Activated T-helper 1 cell treated with anti-CD3 and anti-CD28 coated beads, Interleukin-12 subunit alpha, Interleukin-12 subunit beta, Interleukin-2, Interleukin-4 antibody, amounts not matched to agents 30 ng/mL and 10 ng/mL and 1 ng/mL, durations not matched to agents 14 hours and 24 hours and 36 hours (primary cell): ENCODE measurements at regions of chr12 and their contacts with region 1.

Region 1: GRCh38 chr12:69359531-69360347 is at the start of gene YEATS4:
- DNase-seq: peak; percentile 88
- H3K4me3 Mint-ChIP-seq: peak within 1 kb of the TSS; percentile 94
- H3K27ac Mint-ChIP-seq: peak within 1 kb of the TSS; percentile 89
- H3K4me1 Mint-ChIP-seq: peaks cover 33% of the 10 kb centered on the region
- H3K27me3 Mint-ChIP-seq: peaks cover 3% of the 10 kb centered on the region
- total RNA-seq, gene YEATS4: 45.2 and 47.2 TPM in 2 replicates

Region 2: GRCh38 chr12:69290545-69291277 is 69.0 kb before region 1 on chr12:
- intact Hi-C with region 1: loop called (anchors 1 kb)
- DNase-seq: peak; percentile 60
- H3K4me3 Mint-ChIP-seq: no peak overlapping the region
- H3K27ac Mint-ChIP-seq: no peak overlapping the region
- H3K4me1 Mint-ChIP-seq: no peaks in the 10 kb centered on the region
- H3K27me3 Mint-ChIP-seq: peaks cover 27% of the 10 kb centered on the region

Region 3: DNA sequence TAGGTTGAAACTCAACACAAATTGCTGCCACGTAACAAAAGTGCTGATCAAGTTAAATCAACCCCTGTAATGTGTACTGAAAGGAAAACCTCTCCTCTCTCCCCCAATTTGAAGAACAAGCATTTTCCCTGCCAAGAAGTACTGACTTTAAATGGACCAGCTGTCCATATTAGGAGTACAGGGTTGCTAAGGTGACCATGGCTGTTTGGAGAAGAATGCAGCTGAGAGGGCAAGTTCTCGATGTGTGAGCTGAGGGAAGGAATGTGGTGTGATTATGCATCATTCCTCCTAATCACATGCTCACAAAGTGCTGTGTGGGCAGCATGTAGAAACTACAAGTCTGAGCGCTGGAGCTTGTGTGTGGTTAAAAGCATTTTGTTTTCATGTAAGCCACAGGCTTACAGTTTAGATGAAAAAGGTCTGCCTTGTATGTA is 174.7 kb after region 1 on chr12:
- intact Hi-C with region 1: loop called (anchors 1 kb)
- DNase-seq: peak; percentile 20
- H3K4me3 Mint-ChIP-seq: no peak overlapping the region
- H3K27ac Mint-ChIP-seq: peak overlapping the region; percentile 79
- H3K4me1 Mint-ChIP-seq: peaks cover 24% of the 10 kb centered on the region
- H3K27me3 Mint-ChIP-seq: no peaks in the 10 kb centered on the region

Region 4: GRCh38 chr12:69585189-69586062 is 225.7 kb after region 1 on chr12 and contains the start of gene CCT2:
- intact Hi-C with region 1: loop called (anchors 1 kb)
- DNase-seq: peak; percentile 94
- H3K4me3 Mint-ChIP-seq: peak within 1 kb of the TSS; percentile 98
- H3K27ac Mint-ChIP-seq: peak within 1 kb of the TSS; percentile 97
- H3K4me1 Mint-ChIP-seq: peaks cover 11% of the 10 kb centered on the region
- H3K27me3 Mint-ChIP-seq: no peaks in the 10 kb centered on the region
- total RNA-seq, gene CCT2: 442 and 447 TPM in 2 replicates

Region 5: DNA sequence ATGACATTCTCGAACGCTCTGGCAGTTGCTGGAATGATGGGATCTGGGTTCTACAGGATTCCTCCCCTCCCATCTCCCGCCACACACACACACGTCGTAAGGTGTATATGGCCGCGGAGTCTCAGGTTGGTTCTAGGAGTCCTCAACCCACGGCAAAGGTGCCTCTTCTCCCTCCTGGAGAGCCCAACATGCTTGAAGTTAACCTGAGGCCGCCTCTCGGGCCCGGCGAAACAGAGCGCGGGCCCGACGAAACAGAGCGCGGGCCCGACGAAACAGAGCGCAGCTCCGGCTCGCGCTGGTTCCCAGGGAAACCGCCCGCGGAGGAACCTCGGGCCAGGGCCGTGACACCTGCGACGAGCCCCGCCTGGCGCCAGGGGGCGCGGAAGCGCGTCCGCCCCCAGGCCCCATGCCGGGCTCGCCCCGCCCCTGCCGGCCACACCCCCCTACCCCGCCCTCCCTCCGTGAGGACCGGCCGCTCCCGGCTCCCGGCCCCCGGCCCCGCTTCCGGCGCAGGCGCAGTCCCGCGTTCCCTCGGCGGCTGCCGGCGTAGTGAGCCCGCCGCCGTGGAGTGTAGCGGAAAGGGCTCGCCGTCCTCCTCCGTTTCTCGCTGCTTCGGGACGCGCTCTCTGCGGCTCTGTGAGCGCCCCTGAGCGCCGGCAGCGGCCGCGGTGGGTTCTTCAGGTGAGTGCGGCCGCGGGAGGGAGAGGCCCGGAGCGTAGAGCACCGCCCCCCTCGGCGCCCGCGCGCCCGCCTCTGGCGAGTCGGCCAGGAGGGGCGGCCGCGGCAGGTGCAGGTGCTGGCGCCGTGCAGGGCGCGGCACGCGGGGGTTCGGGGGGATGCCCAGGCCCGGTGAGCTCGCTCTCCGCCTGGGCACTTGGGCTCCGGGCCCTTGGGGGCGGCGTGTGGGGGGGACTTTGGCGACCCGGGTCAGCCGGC is 378.9 kb after region 1 on chr12 and contains the start of gene RAB3IP:
- intact Hi-C with region 1: loop called (anchors 1 kb)
- DNase-seq: peak; percentile 88
- H3K4me3 Mint-ChIP-seq: peak within 1 kb of the TSS; percentile 95
- H3K27ac Mint-ChIP-seq: peak within 1 kb of the TSS; percentile 92
- H3K4me1 Mint-ChIP-seq: peaks cover 31% of the 10 kb centered on the region
- H3K27me3 Mint-ChIP-seq: peaks cover 36% of the 10 kb centered on the region
- total RNA-seq, gene RAB3IP: 29.8 and 36.1 TPM in 2 replicates